GM12878 (cell line): ENCODE measurements at regions of chr12 and their contacts with region 1.

Region 1: GRCh38 chr12:45244561-45245343 is 28.9 kb downstream of the ANO6 start:
- DNase-seq: peak; percentile 56
- ATAC-seq: peak; percentile 92
- H3K4me3 ChIP-seq: peak overlapping the region; percentile 29; the same call in 1 of the 2 replicates
- H3K27ac ChIP-seq: peak overlapping the region; percentile 72
- H3K4me1 ChIP-seq: peaks cover 9% of the 10 kb centered on the region
- H3K27me3 ChIP-seq: no peaks in the 10 kb centered on the region
- CTCF ChIP-seq: no peak
- EP300 ChIP-seq: peak in 1 of 2 experiments; percentile 58; a peak in 1 of 4 replicates
- POLR2A ChIP-seq: no peak
- RAD21 ChIP-seq: no peak

Region 2: GRCh38 chr12:45234139-45234846 is 10.5 kb before region 1 on chr12:
- CTCF ChIA-PET with region 1: interaction called, 5 read pairs
- POLR2A ChIA-PET with region 1: no interaction called
- RAD21 ChIA-PET with region 1: interaction called, 4 read pairs
- SMC1A ChIA-PET with region 1: interaction called, 10 read pairs
- in situ Hi-C with region 1: no loop called
- intact Hi-C with region 1: no loop called
- DNase-seq: no peak
- ATAC-seq: peak; percentile 78
- H3K4me3 ChIP-seq: 0 out of 2 replicates have a peak overlapping the region, but pooled peaks have one; percentile 11
- H3K27ac ChIP-seq: peak overlapping the region; percentile 66
- H3K4me1 ChIP-seq: peaks cover 40% of the 10 kb centered on the region
- H3K27me3 ChIP-seq: no peaks in the 10 kb centered on the region
- CTCF ChIP-seq: no peak
- EP300 ChIP-seq: no peak
- POLR2A ChIP-seq: no peak
- RAD21 ChIP-seq: no peak